Activated B cell treated with CpG ODN at 0.5 μM for 24 hours (primary cell): ENCODE measurements at regions of chr11 and their contacts with region 1.

Region 1: GRCh38 chr11:13276832-13277767 is 490 bp upstream of the BMAL1 start:
- DNase-seq: peak; percentile 92
- ATAC-seq: peak; percentile 87
- H3K4me3 Mint-ChIP-seq: peak overlapping the region; percentile 97
- H3K27ac Mint-ChIP-seq: peak overlapping the region; percentile 82
- H3K4me1 Mint-ChIP-seq: peaks cover 36% of the 10 kb centered on the region
- H3K27me3 Mint-ChIP-seq: peaks cover 6% of the 10 kb centered on the region
- CTCF ChIP-seq: no peak

Region 2: GRCh38 chr11:12673924-12674570 is 603.1 kb before region 1 on chr11 and contains the start of gene TEAD1:
- CTCF ChIA-PET with region 1: no interaction called
- POLR2A ChIA-PET with region 1: no interaction called
- intact Hi-C with region 1: loop called (anchors 5 kb)
- DNase-seq: peak; percentile 65
- ATAC-seq: peak; percentile 83
- H3K4me3 Mint-ChIP-seq: peak within 1 kb of the TSS; percentile 75
- H3K27ac Mint-ChIP-seq: no peak within 1 kb of the TSS
- H3K4me1 Mint-ChIP-seq: peaks cover 15% of the 10 kb centered on the region
- H3K27me3 Mint-ChIP-seq: peaks cover 62% of the 10 kb centered on the region
- CTCF ChIP-seq: no peak
- total RNA-seq, gene TEAD1: 0.07 and 0.12 TPM in 2 replicates

Region 3: GRCh38 chr11:13008625-13009475 is 268.2 kb before region 1 on chr11 and contains the start of gene RASSF10:
- CTCF ChIA-PET with region 1: no interaction called
- POLR2A ChIA-PET with region 1: no interaction called
- intact Hi-C with region 1: no loop called
- DNase-seq: no peak
- ATAC-seq: no peak
- H3K4me3 Mint-ChIP-seq: peak within 1 kb of the TSS; percentile 41
- H3K27ac Mint-ChIP-seq: no peak within 1 kb of the TSS
- H3K4me1 Mint-ChIP-seq: peaks cover 4% of the 10 kb centered on the region
- H3K27me3 Mint-ChIP-seq: peaks cover 37% of the 10 kb centered on the region
- CTCF ChIP-seq: no peak
- total RNA-seq, gene RASSF10: not detected in 2 replicates

Region 4: GRCh38 chr11:13316528-13316961 is 39.4 kb after region 1 on chr11:
- CTCF ChIA-PET with region 1: no interaction called
- POLR2A ChIA-PET with region 1: interaction called, 3 read pairs
- intact Hi-C with region 1: loop called (anchors 1 kb)
- DNase-seq: peak; percentile 23
- ATAC-seq: peak; percentile 96
- H3K4me3 Mint-ChIP-seq: no peak overlapping the region
- H3K27ac Mint-ChIP-seq: peak overlapping the region; percentile 65
- H3K4me1 Mint-ChIP-seq: peaks cover 40% of the 10 kb centered on the region
- H3K27me3 Mint-ChIP-seq: no peaks in the 10 kb centered on the region
- CTCF ChIP-seq: no peak

Region 5: GRCh38 chr11:13335319-13335718 is 58.2 kb after region 1 on chr11:
- CTCF ChIA-PET with region 1: interaction called, 3 read pairs
- POLR2A ChIA-PET with region 1: no interaction called
- intact Hi-C with region 1: loop called (anchors 2 kb)
- DNase-seq: no peak
- ATAC-seq: peak; percentile 82
- H3K4me3 Mint-ChIP-seq: no peak overlapping the region
- H3K27ac Mint-ChIP-seq: no peak overlapping the region
- H3K4me1 Mint-ChIP-seq: peaks cover 48% of the 10 kb centered on the region
- H3K27me3 Mint-ChIP-seq: no peaks in the 10 kb centered on the region
- CTCF ChIP-seq: no peak

Region 6: DNA sequence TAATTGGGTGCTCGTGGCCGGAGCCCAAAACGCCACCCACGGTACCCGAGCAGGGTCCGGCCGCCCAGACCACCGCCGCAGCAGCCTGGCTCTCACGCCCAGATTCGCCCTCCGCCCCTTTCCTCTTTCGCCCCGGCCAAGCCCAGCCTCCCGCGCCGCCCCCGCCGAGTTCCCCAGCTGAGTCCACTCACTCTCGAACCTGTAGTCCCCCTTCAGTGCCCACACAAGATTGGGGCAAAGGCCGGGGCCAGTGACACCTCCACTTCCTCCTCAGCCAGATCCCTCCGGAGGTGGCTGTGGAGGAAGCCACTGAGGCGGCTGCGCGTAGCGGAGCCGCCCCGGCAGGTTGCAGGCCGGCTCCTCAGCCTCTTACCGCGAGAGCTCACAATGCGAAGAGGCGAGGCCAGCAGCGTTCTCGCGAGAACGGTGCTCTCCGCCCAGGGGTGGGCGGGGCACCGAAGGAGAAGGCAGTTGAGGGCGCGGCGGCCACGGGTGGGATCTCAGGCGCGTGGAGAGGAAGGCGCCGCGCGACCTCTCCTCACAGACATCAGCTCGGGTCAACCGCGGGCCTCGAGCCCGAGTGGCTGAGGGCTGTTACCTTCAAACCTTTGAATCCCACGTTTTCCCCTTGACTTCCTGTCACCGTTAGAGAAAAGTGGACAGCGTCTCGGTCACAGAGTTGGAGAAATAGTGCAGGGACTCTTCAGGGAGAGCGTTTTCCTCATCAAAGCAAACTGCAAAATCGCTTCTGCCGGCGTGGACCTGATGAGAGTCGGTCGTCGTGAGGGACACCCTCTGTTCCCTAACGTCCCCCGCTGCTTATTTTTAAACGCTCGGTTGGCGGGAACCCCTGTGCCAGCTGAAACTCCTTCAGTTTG is 186.0 kb after region 1 on chr11 and contains the start of gene BTBD10:
- CTCF ChIA-PET with region 1: no interaction called
- POLR2A ChIA-PET with region 1: interaction called, 5 read pairs
- intact Hi-C with region 1: loop called (anchors 1 kb)
- DNase-seq: peak; percentile 91
- ATAC-seq: peak; percentile 98
- H3K4me3 Mint-ChIP-seq: peak within 1 kb of the TSS; percentile 98
- H3K27ac Mint-ChIP-seq: peak within 1 kb of the TSS; percentile 95
- H3K4me1 Mint-ChIP-seq: peaks cover 43% of the 10 kb centered on the region
- H3K27me3 Mint-ChIP-seq: no peaks in the 10 kb centered on the region
- CTCF ChIP-seq: no peak
- total RNA-seq, gene BTBD10: 18.8 and 25.1 TPM in 2 replicates

Region 7: GRCh38 chr11:13668102-13668956 is 391.2 kb after region 1 on chr11 and contains the start of gene FAR1:
- CTCF ChIA-PET with region 1: no interaction called
- POLR2A ChIA-PET with region 1: no interaction called
- intact Hi-C with region 1: loop called (anchors 1 kb)
- DNase-seq: peak; percentile 93
- ATAC-seq: peak; percentile 91
- H3K4me3 Mint-ChIP-seq: peak within 1 kb of the TSS; percentile 99
- H3K27ac Mint-ChIP-seq: peak within 1 kb of the TSS; percentile 95
- H3K4me1 Mint-ChIP-seq: peaks cover 44% of the 10 kb centered on the region
- H3K27me3 Mint-ChIP-seq: peaks cover 7% of the 10 kb centered on the region
- CTCF ChIP-seq: no peak
- total RNA-seq, gene FAR1: 39.2 and 48.4 TPM in 2 replicates

Region 8: DNA sequence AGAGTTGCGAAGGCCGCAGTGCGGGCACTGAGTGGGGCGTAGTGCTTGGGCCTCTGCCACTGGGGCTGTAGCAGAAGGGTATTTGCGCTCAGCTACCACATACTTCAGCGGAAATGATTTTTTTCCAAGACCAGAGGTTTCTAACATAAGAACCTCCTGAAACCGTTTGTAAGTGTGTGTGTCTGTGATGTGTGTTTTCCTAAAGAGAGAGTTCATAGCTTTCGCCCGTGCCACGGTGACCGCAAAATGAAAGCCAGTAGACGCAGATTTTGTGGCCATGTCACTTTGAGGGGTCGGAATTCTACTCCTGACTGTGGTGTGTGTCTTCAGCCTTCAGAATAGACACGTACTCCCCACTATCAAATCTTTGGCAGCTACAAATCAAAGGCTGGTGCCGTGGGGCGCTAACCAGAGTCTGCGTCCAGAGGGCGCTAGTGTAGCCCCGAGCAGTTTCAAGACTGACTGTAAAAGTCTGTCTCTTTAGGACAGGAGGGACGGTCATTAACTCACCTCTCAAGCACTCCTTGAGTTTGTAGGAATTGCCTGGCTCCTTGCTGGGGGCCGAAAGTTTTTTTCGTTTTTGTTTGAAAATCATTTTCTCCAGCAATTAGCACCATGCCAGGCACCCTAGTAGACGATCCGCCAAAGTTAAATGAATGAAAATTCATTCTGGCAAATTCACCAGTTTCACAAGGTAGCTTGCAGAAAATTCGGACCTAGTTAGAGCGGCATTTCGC is 1697.6 kb after region 1 on chr11:
- CTCF ChIA-PET with region 1: no interaction called
- POLR2A ChIA-PET with region 1: no interaction called
- intact Hi-C with region 1: loop called (anchors 5 kb)
- DNase-seq: no peak
- ATAC-seq: peak; percentile 51
- H3K4me3 Mint-ChIP-seq: peak overlapping the region; percentile 62
- H3K27ac Mint-ChIP-seq: no peak overlapping the region
- H3K4me1 Mint-ChIP-seq: peaks cover 30% of the 10 kb centered on the region
- H3K27me3 Mint-ChIP-seq: peaks cover 62% of the 10 kb centered on the region
- CTCF ChIP-seq: no peak